Vagina (tissue), 2 donors: ENCODE measurements at regions of chr9 and their contacts with region 1.

Region 1: DNA sequence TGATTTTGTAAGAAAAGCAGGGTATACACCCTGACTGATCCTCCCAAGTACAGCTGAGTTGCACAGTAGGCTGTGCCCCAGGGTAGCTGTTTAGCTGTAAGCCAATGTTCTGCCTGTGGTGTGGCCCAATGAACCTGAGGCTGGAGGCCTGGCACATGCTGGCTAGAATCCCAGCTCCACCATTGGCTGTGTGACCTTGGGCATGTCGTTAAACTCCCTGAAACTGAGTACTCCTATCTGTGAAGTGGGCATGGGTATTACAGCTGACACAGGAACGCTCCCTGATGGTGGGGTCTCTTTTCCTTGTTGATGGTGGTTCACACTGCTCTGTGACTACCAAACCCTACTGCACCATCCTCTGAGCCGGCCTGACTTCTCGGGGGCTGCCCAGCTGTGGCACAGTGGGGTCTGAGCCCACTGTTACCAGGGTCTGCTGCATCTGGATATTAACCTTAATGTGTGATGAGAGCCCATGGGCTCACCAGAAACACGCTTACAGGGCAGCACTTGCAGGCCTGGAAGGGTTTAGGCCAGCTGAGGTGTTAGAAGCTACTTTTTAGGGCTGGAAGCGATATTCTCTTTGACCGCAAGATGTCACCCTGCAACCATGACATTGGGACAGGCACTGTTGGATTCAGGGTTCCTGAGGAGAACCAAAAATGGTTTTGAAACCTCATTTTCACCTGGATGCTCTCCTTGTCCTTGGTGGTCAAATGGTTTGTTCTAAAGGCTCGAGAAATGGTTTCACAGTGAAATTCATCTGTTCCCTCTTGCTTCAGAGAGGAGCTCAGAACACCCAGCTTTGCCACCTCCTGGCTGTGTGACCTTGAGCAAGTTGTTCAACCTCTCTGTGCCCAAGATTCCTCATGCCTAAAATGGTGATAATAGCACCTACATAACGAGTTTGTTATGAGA is 6.8 kb upstream of the GADD45G start:
- DNase-seq: peak; percentile 72
- H3K4me3 ChIP-seq: no peak overlapping the region
- H3K27ac ChIP-seq: no peak overlapping the region
- H3K4me1 ChIP-seq: no peaks in the 10 kb centered on the region
- H3K27me3 ChIP-seq: no peaks in the 10 kb centered on the region
- CTCF ChIP-seq: peak; percentile 44 to 84 (median 71)
- POLR2A ChIP-seq: no peak

Region 2: GRCh38 chr9:90102292-90102901 is 504.4 kb after region 1 on chr9:
- intact Hi-C with region 1: loop called (anchors 5 kb)
- DNase-seq: no peak
- H3K4me3 ChIP-seq: no peak overlapping the region
- H3K27ac ChIP-seq: no peak overlapping the region
- H3K4me1 ChIP-seq: peaks cover 10% of the 10 kb centered on the region
- H3K27me3 ChIP-seq: no peaks in the 10 kb centered on the region
- CTCF ChIP-seq: peak; percentile 53 to 79 (median 74)
- POLR2A ChIP-seq: no peak